Activated CD8-positive, alpha-beta T cell treated with anti-CD3 and anti-CD28 coated beads, Interleukin-2, amount 10 ng/mL, durations not matched to agents 7 days and 5 days (primary cell): ENCODE measurements at regions of chr5 and their contacts with region 1.

Region 1: DNA sequence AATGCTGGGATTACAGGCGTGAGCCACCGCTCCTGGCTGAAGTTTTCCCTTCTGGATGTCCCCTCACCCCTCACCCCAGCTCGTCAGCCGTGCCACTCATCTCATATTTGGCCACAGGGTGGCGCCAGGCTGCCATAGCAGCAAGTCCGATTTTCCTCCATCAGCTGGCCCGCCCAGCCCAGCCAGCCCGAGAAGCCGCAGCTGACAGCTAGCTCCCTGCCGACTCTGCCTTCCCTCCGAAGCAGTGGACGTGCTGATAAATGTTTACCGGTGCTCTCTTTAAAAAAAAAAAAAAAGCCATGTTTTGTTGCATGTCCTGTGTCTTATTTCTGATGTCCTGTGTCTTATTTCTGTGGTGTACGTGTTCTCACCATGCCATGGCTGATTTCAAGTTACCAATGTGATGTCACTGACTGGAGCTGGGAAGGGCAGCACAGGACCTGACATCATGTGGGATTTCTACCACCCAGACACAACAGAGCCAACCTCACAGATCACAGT is 58.3 kb downstream of the PFDN1 start:
- DNase-seq: peak; percentile 89
- ATAC-seq: peak; percentile 74
- H3K4me3 Mint-ChIP-seq: no peak overlapping the region
- H3K27ac Mint-ChIP-seq: peak overlapping the region; percentile 65
- H3K4me1 Mint-ChIP-seq: peaks cover 40% of the 10 kb centered on the region
- H3K27me3 Mint-ChIP-seq: no peaks in the 10 kb centered on the region

Region 2: DNA sequence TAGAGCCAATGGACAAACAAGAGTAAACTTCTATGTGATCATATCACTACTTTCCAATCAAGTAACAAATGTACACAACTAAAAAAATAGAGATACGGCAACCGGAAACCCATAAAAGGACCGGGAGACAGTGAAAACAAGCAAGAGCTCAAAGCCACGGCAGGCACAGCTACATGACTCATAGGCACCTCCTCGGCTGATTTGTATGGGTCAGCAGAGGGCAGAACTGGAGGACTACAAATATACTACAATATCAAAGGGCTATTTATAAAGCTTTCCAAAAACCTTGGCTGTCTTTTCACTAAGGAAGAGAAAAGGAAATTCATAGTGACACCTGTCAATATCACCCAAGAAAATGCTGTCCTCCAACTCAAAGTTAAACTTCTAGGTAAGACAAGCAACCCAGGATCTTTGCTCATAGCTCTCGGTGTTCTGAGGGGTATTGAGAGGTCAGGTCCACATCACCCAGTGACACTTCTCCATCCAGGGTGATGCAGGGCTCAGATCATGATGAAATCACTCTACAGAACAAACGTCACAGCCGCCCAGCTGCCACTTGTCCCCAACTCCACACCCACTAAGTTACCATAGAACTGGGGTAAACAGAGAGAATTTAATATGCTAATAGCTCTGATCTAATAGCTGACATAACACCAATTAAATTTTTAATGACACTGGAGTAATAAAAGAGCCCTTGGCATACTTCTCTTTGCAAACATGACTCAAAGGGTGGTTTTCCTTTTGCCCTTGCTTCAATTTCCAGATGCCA is 17.0 kb after region 1 on chr5:
- CTCF ChIA-PET with region 1: interaction called, 25 read pairs
- POLR2A ChIA-PET with region 1: no interaction called
- DNase-seq: no peak
- ATAC-seq: peak; percentile 60
- H3K4me3 Mint-ChIP-seq: no peak overlapping the region
- H3K27ac Mint-ChIP-seq: no peak overlapping the region
- H3K4me1 Mint-ChIP-seq: peaks cover 61% of the 10 kb centered on the region
- H3K27me3 Mint-ChIP-seq: no peaks in the 10 kb centered on the region

Region 3: DNA sequence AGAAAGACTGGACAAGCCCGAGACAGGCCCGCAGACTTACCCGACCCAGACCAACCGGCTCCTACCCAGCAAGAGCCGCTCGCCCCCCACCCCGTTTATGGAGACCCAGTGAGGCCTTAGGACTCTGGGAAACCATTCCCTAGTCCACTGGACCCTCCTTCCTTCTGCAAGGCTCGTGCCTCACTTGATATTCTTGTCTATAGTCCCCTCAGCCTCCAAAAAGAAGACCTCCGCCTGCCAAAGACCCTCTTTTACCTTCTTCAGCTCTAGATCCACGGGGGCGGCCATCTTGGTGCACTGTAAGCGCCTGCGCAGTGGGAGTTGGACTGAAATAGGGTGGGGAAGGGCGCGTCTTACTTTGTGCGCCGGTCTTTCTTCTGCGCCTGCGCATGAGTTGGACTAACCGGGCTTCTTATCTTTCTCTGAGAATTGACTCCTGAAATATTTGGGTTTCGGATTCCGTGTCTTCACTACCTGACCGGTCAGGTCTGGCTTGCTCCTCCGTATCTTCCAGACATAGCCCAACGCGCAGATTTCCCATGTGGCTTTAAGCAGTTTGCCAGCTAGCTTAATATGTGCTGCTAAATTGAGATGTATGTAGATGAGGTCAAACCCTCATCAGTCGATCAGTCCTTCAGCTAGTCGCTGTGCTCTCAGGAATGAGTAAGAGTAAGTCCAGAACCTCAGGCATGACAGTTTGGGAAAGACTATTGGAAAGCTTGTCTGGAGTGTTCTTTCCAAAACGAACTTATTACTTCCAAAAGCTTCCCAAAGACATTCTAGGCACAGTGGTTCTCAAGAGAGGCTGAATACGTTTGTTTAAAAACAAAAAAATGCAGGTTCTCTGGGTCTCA is 58.4 kb after region 1 on chr5 and contains the start of gene PFDN1:
- CTCF ChIA-PET with region 1: interaction called, 26 read pairs
- POLR2A ChIA-PET with region 1: interaction called, 10 read pairs
- DNase-seq: peak; percentile 97
- ATAC-seq: peak; percentile 100
- H3K4me3 Mint-ChIP-seq: peak within 1 kb of the TSS; percentile 92
- H3K27ac Mint-ChIP-seq: peak within 1 kb of the TSS; percentile 92
- H3K4me1 Mint-ChIP-seq: peaks cover 28% of the 10 kb centered on the region
- H3K27me3 Mint-ChIP-seq: peaks cover 9% of the 10 kb centered on the region
- total RNA-seq, gene PFDN1: 62.4 to 64.7 TPM

Region 4: GRCh38 chr5:140346348-140347101 is 102.0 kb after region 1 on chr5 and contains the start of gene HBEGF:
- CTCF ChIA-PET with region 1: interaction called, 796 read pairs
- POLR2A ChIA-PET with region 1: interaction called, 16 read pairs
- DNase-seq: peak; percentile 62
- ATAC-seq: peak; percentile 70
- H3K4me3 Mint-ChIP-seq: peak within 1 kb of the TSS; percentile 84
- H3K27ac Mint-ChIP-seq: peak within 1 kb of the TSS; percentile 70
- H3K4me1 Mint-ChIP-seq: peaks cover 66% of the 10 kb centered on the region
- H3K27me3 Mint-ChIP-seq: peaks cover 6% of the 10 kb centered on the region
- total RNA-seq, gene HBEGF: 12.6 to 13.5 TPM

Region 5: GRCh38 chr5:140362860-140363630 is 118.5 kb after region 1 on chr5:
- CTCF ChIA-PET with region 1: interaction called, 63 read pairs
- POLR2A ChIA-PET with region 1: no interaction called
- DNase-seq: peak; percentile 89
- ATAC-seq: peak; percentile 94
- H3K4me3 Mint-ChIP-seq: peak overlapping the region; percentile 71
- H3K27ac Mint-ChIP-seq: peak overlapping the region; percentile 54
- H3K4me1 Mint-ChIP-seq: peaks cover 11% of the 10 kb centered on the region
- H3K27me3 Mint-ChIP-seq: peaks cover 7% of the 10 kb centered on the region

Region 6: GRCh38 chr5:140725799-140726471 is 481.4 kb after region 1 on chr5:
- CTCF ChIA-PET with region 1: interaction called, 11 read pairs
- POLR2A ChIA-PET with region 1: no interaction called
- DNase-seq: peak; percentile 86
- ATAC-seq: peak; percentile 94
- H3K4me3 Mint-ChIP-seq: peak overlapping the region; percentile 79
- H3K27ac Mint-ChIP-seq: peak overlapping the region; percentile 80
- H3K4me1 Mint-ChIP-seq: peaks cover 14% of the 10 kb centered on the region
- H3K27me3 Mint-ChIP-seq: peaks cover 26% of the 10 kb centered on the region